Panc1 (cell line): ENCODE measurements at regions of chr17 and their contacts with region 1.

Region 1: GRCh38 chr17:49170216-49170615 is 37.6 kb downstream of the B4GALNT2 start:
- DNase-seq: no peak
- ATAC-seq: no peak
- H3K4me3 ChIP-seq: no peak overlapping the region
- H3K27ac ChIP-seq: no peak overlapping the region
- H3K4me1 ChIP-seq: no peaks in the 10 kb centered on the region
- H3K27me3 ChIP-seq: peaks cover 36% of the 10 kb centered on the region
- CTCF ChIP-seq: no peak

Region 2: GRCh38 chr17:49053171-49053829 is 116.9 kb before region 1 on chr17:
- CTCF ChIA-PET with region 1: interaction called, 10 read pairs
- POLR2A ChIA-PET with region 1: no interaction called
- in situ Hi-C with region 1: no loop called
- intact Hi-C with region 1: no loop called
- DNase-seq: no peak
- ATAC-seq: peak; percentile 27; the same call in 1 of the 2 replicates
- H3K4me3 ChIP-seq: no peak overlapping the region
- H3K27ac ChIP-seq: no peak overlapping the region
- H3K4me1 ChIP-seq: no peaks in the 10 kb centered on the region
- H3K27me3 ChIP-seq: no peaks in the 10 kb centered on the region
- CTCF ChIP-seq: no peak

Region 3: DNA sequence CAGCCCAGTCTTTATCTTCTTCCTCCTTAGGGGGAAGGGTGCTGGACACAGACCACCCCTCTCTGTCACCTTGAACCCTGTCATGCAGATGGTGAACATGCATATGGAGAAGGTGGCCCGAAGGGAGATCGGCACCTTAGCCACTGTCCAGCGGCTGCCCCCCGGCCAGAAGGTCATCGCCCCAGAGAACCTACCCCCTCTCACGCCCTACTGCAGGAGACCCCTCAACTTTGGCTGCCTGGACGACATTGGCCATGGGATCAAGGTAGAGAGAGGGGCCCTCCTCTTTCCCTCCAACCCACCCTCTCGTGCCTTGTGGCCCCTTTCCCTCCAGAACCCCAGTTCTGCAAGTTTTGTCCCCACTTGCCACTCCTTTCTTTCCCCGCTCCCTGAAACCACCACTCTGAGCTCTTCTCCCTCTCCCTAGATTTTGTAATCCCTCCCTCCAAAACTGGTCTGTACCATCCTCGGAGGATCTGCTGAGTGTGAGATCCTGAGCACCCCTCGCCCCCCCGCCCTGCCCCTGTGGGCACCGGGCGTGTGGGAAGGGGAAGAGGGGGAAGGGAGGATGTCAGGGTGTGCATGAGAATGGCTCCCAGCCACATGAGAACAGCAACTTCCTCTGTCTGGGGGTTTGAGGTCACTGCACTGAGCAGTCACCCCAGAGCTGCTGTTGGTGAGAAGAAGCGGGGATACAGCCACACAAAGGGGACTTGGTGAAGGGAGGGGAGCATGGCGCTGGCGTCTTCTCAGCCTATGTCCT is 47.6 kb after region 1 on chr17:
- CTCF ChIA-PET with region 1: no interaction called
- POLR2A ChIA-PET with region 1: no interaction called
- in situ Hi-C with region 1: no loop called
- intact Hi-C with region 1: no loop called
- DNase-seq: no peak
- ATAC-seq: no peak
- H3K4me3 ChIP-seq: no peak overlapping the region
- H3K27ac ChIP-seq: no peak overlapping the region
- H3K4me1 ChIP-seq: no peaks in the 10 kb centered on the region
- H3K27me3 ChIP-seq: no peaks in the 10 kb centered on the region
- CTCF ChIP-seq: no peak